Activated CD4-positive, alpha-beta memory T cell treated with anti-CD3 and anti-CD28 coated beads for 36 hours (primary cell): ENCODE measurements at regions of chrX and their contacts with region 1.

Region 1: DNA sequence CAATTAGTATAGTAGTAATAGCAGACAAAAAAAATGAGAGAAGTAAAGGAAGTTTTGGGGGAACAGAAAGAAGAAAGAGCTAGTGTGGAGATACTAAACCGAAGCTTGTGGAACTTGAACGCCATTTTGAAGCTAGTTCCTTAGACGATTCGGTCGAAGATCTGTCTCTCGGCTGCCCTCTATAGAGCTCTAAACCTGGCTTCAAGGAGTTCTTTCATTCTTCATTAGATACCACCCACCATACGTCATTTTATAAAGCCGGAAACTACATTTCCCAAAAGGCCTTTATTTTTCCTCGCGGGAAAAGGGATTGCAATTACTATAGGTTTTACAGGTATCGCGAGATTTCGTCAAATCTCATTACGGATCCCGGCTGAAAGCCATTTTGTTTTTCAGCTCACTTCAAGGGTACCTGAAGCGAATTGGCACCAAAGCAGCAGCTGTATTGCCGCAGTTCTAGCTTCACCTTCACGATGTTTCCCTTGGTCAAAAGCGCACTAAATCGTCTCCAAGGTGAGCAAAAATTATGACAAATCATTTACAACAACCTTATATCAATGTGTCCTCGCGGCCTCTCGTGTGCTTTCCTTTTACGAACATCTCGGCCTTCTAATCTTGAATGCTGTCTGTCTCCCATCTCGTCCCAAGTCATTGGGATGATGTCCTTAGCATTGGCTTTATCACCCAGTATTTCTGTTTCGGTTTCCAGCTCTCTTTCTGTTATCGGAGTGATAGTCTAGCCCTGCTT is at the start of gene COX7B:
- DNase-seq: peak; percentile 72
- H3K4me3 Mint-ChIP-seq: peak within 1 kb of the TSS; percentile 92
- H3K27ac Mint-ChIP-seq: peak within 1 kb of the TSS; percentile 97
- H3K4me1 Mint-ChIP-seq: peaks cover 18% of the 10 kb centered on the region
- H3K27me3 Mint-ChIP-seq: no peaks in the 10 kb centered on the region
- total RNA-seq, gene COX7B: 295 to 320 TPM

Region 2: GRCh38 chrX:76148753-76149152 is 1750.5 kb before region 1 on chrX:
- CTCF ChIA-PET with region 1: no interaction called
- POLR2A ChIA-PET with region 1: no interaction called
- intact Hi-C with region 1: loop called (anchors 5 kb)
- DNase-seq: peak; percentile 57
- H3K4me3 Mint-ChIP-seq: peak overlapping the region; percentile 74
- H3K27ac Mint-ChIP-seq: peak overlapping the region; percentile 99
- H3K4me1 Mint-ChIP-seq: peaks cover 11% of the 10 kb centered on the region
- H3K27me3 Mint-ChIP-seq: no peaks in the 10 kb centered on the region

Region 3: GRCh38 chrX:77446029-77446585 is 453.1 kb before region 1 on chrX:
- CTCF ChIA-PET with region 1: no interaction called
- POLR2A ChIA-PET with region 1: no interaction called
- intact Hi-C with region 1: loop called (anchors 2 kb)
- DNase-seq: peak; percentile 48
- H3K4me3 Mint-ChIP-seq: peak overlapping the region; percentile 69
- H3K27ac Mint-ChIP-seq: no peak overlapping the region
- H3K4me1 Mint-ChIP-seq: peaks cover 3% of the 10 kb centered on the region
- H3K27me3 Mint-ChIP-seq: peaks cover 10% of the 10 kb centered on the region

Region 4: DNA sequence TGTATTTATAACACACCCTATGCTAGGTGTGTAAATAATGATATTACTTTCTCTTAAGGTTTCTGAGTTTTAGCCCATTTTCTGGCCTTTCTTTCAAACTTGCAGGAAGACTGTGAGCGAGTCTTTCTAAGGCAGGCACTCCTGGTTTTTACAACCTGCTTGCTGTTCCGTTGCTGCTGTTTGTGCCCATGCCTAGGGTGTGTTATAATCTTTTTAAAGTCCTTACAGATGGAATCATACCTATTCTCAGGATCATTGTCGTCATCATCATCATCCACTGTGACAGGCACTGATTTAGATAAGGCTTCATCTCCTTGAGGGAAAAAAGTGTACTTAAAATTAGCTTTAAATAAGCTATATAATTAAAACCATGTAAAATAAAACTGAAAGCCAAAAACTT is 223.3 kb before region 1 on chrX:
- CTCF ChIA-PET with region 1: no interaction called
- POLR2A ChIA-PET with region 1: no interaction called
- intact Hi-C with region 1: loop called (anchors 5 kb)
- DNase-seq: no peak
- H3K4me3 Mint-ChIP-seq: no peak overlapping the region
- H3K27ac Mint-ChIP-seq: no peak overlapping the region
- H3K4me1 Mint-ChIP-seq: peaks cover 4% of the 10 kb centered on the region
- H3K27me3 Mint-ChIP-seq: no peaks in the 10 kb centered on the region

Region 5: DNA sequence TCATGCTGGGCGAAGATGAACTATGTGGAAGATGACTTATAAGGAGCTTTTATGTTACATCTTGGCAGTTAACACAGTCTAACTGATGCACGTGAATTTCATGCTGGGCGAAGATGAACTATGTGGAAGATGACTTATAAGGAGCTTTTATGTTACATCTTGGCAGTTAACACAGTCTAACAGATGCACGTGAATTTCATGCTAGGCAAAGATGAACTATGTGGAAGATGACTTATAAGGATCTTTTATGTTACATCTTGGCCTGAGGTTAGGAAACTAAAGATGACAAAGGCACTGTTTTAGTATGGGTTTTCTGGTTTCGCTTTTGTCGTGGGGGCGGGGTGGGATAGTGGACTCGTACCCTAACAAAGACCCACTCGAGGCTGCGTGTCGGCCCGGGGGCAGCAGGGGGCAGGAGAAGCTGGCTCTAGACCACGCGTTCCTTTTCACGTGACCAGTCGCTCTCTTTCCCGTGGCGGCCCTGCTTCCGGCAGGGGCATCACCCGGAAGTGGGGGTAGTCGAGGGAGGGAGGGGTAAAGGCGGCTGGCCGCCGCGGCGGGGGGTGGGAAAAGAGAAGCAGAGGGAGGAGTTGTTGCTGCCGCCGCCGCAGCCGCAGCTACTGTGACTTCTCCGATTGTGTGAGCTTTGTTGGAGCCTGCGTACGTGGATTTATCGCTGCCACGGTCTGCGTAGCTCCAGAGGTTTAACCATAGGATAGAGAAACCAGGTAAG is 11.0 kb after region 1 on chrX and contains the start of gene ATP7A:
- CTCF ChIA-PET with region 1: interaction called, 17 read pairs
- POLR2A ChIA-PET with region 1: interaction called, 10 read pairs
- intact Hi-C with region 1: loop called (anchors 1 kb)
- DNase-seq: peak; percentile 95
- H3K4me3 Mint-ChIP-seq: peak within 1 kb of the TSS; percentile 99
- H3K27ac Mint-ChIP-seq: peak within 1 kb of the TSS; percentile 99
- H3K4me1 Mint-ChIP-seq: peaks cover 19% of the 10 kb centered on the region
- H3K27me3 Mint-ChIP-seq: no peaks in the 10 kb centered on the region
- total RNA-seq, gene ATP7A: 8.0 TPM

Region 6: DNA sequence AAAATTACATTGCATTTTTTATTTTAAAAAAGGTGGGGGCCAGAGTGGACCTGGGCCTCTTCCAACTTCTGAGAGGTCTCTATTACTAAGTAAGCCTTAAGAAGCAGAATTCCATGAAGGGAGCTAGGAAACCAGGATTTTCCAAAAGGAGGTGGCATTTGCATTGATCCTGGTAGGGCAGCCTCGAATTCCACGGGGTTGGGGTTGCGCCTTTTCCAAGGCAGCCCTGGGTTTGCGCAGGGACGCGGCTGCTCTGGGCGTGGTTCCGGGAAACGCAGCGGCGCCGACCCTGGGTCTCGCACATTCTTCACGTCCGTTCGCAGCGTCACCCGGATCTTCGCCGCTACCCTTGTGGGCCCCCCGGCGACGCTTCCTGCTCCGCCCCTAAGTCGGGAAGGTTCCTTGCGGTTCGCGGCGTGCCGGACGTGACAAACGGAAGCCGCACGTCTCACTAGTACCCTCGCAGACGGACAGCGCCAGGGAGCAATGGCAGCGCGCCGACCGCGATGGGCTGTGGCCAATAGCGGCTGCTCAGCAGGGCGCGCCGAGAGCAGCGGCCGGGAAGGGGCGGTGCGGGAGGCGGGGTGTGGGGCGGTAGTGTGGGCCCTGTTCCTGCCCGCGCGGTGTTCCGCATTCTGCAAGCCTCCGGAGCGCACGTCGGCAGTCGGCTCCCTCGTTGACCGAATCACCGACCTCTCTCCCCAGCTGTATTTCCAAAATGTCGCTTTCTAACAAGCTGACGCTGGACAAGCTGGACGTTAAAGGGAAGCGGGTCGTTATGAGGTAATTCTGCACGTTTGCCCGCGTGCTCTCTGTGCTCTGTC is 204.6 kb after region 1 on chrX and contains the start of gene PGK1:
- CTCF ChIA-PET with region 1: interaction called, 6 read pairs
- POLR2A ChIA-PET with region 1: interaction called, 10 read pairs
- intact Hi-C with region 1: loop called (anchors 2 kb)
- DNase-seq: peak; percentile 96
- H3K4me3 Mint-ChIP-seq: peak within 1 kb of the TSS; percentile 93
- H3K27ac Mint-ChIP-seq: peak within 1 kb of the TSS; percentile 90
- H3K4me1 Mint-ChIP-seq: peaks cover 40% of the 10 kb centered on the region
- H3K27me3 Mint-ChIP-seq: no peaks in the 10 kb centered on the region
- total RNA-seq, gene PGK1: 908 to 924 TPM